Spleen (tissue), 13 donors: ENCODE measurements at regions of chr9 and their contacts with region 1.

Region 1: DNA sequence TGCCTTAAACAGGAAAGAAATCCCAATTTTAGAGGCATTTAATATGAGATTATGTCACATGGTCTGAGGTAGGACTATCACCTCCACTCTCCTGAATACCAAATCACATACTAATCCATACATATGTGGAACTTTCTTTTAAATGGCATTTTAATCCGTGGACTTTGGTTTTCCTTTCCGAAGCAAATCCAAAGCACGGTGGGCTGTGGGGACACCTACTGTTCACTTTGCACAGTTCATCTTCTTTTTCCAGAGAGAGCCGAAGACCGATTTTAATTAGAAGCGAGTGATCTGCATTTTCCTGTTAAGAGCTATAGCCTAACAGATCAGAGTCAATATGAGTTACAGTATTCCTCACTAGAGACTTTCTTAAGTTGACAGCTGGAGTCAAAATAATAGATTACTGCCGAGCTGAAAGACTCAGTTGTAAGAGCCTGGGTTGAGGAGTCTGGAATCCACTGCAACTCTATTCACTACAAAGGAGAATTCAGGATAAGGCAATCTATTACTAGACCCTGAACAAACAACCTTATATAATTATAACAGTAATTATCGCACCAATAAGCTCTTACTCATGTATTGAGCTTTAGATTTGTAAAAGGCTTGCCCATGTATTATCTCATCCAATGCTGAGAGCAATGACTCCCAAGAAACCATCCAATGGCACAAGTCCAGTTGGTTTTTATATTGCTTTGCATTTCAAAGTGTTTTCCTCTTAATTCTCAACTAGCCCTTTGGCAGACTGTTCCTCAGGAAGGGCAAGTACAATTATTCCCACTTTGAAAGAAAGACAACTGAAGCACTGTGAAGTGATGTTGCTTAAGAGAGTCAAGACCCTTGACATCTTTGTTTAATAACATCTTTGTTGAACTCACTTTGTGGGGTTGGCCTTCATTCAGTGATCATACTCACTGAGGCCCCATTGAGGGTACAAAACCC is 144.7 kb downstream of the TRPM6 start:
- DNase-seq: no peak
- H3K4me3 ChIP-seq: no peak overlapping the region
- H3K27ac ChIP-seq: no peak overlapping the region
- H3K4me1 ChIP-seq: peaks cover 0 to 7% (median 0%) of the 10 kb centered on the region in 6 donors
- H3K27me3 ChIP-seq: peaks cover 0 to 17% (median 0%) of the 10 kb centered on the region in 7 donors
- CTCF ChIP-seq: peak in 8 of 11 experiments; percentile 36 to 64 (median 55)
- POLR2A ChIP-seq: no peak

Region 2: GRCh38 chr9:74577956-74578355 is 165.1 kb before region 1 on chr9:
- intact Hi-C with region 1: loop called (anchors 5 kb)
- DNase-seq: no peak
- H3K4me3 ChIP-seq: no peak overlapping the region
- H3K27ac ChIP-seq: no peak overlapping the region
- H3K4me1 ChIP-seq: no peaks in the 10 kb centered on the region
- H3K27me3 ChIP-seq: no peaks in the 10 kb centered on the region
- CTCF ChIP-seq: peak in 3 of 11 experiments; percentile 11 to 24 (median 17)
- POLR2A ChIP-seq: no peak